ENCODE measurements at regions of chr5 and their contacts with region 1.

Region 1: GRCh38 chr5:59506285-59506877 is 387.1 kb downstream of the PDE4D start:
- DNase-seq: peak; percentile 27
- H3K4me3 Mint-ChIP-seq: no peak overlapping the region
- H3K27ac Mint-ChIP-seq: no peak overlapping the region
- H3K4me1 Mint-ChIP-seq: peaks cover 17% of the 10 kb centered on the region
- H3K27me3 Mint-ChIP-seq: no peaks in the 10 kb centered on the region
- CTCF ChIP-seq: peak; percentile 60

Region 2: DNA sequence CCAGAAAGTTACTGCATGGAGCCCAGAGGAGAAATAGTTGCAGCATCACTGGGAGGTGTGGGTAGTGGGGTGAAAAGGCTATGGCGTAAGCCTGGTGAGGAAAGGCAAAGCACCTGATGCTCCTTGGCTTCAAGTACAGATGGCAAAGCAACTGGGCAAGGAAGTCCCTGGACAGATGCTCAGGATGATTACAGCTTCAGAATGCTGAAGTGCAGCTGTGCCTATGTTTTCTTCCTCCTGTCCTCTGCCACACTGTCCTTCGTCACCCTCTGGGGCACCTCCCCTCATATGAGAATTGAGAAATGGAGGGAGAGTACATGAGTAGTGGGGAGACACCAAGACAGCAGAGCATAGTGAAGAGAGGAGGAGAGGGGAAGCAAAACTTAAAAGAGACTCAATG is 59.2 kb after region 1 on chr5:
- CTCF ChIA-PET with region 1: no interaction called
- POLR2A ChIA-PET with region 1: no interaction called
- intact Hi-C with region 1: no loop called
- DNase-seq: no peak
- H3K4me3 Mint-ChIP-seq: no peak overlapping the region
- H3K27ac Mint-ChIP-seq: no peak overlapping the region
- H3K4me1 Mint-ChIP-seq: peaks cover 32% of the 10 kb centered on the region
- H3K27me3 Mint-ChIP-seq: no peaks in the 10 kb centered on the region
- CTCF ChIP-seq: no peak

Region 3: DNA sequence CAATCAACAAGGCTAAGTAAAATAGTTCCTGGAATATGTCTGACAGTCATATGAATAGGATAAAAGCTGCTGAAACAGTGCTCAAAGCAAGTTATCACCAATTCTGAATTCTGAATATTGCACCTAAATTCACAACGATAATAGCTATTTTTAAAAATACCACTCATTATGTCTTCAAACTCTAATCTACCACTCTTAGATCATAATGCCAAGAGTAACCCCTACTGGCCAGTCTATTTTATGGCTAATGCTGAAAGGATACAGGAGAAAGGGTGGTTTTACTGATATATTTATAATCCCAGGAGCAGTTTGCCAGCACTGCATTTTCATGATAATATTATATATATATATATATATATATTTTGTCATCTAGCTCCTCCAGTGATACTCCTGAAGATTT is 154.4 kb after region 1 on chr5:
- CTCF ChIA-PET with region 1: interaction called, 63 read pairs
- POLR2A ChIA-PET with region 1: interaction called, 6 read pairs
- intact Hi-C with region 1: loop called (anchors 1 kb)
- DNase-seq: peak; percentile 36
- H3K4me3 Mint-ChIP-seq: no peak overlapping the region
- H3K27ac Mint-ChIP-seq: no peak overlapping the region
- H3K4me1 Mint-ChIP-seq: peaks cover 28% of the 10 kb centered on the region
- H3K27me3 Mint-ChIP-seq: no peaks in the 10 kb centered on the region
- CTCF ChIP-seq: peak; percentile 42

Region 4: GRCh38 chr5:59666440-59667068 is 160.2 kb after region 1 on chr5:
- CTCF ChIA-PET with region 1: interaction called, 72 read pairs
- POLR2A ChIA-PET with region 1: interaction called, 6 read pairs
- intact Hi-C with region 1: no loop called
- DNase-seq: no peak
- H3K4me3 Mint-ChIP-seq: no peak overlapping the region
- H3K27ac Mint-ChIP-seq: no peak overlapping the region
- H3K4me1 Mint-ChIP-seq: peaks cover 20% of the 10 kb centered on the region
- H3K27me3 Mint-ChIP-seq: no peaks in the 10 kb centered on the region
- CTCF ChIP-seq: no peak

Region 5: GRCh38 chr5:59673438-59674058 is 167.2 kb after region 1 on chr5:
- CTCF ChIA-PET with region 1: interaction called, 72 read pairs
- POLR2A ChIA-PET with region 1: interaction called, 10 read pairs
- intact Hi-C with region 1: loop called (anchors 1 kb)
- DNase-seq: peak; percentile 59
- H3K4me3 Mint-ChIP-seq: no peak overlapping the region
- H3K27ac Mint-ChIP-seq: no peak overlapping the region
- H3K4me1 Mint-ChIP-seq: peaks cover 6% of the 10 kb centered on the region
- H3K27me3 Mint-ChIP-seq: no peaks in the 10 kb centered on the region
- CTCF ChIP-seq: peak; percentile 65

Region 6: DNA sequence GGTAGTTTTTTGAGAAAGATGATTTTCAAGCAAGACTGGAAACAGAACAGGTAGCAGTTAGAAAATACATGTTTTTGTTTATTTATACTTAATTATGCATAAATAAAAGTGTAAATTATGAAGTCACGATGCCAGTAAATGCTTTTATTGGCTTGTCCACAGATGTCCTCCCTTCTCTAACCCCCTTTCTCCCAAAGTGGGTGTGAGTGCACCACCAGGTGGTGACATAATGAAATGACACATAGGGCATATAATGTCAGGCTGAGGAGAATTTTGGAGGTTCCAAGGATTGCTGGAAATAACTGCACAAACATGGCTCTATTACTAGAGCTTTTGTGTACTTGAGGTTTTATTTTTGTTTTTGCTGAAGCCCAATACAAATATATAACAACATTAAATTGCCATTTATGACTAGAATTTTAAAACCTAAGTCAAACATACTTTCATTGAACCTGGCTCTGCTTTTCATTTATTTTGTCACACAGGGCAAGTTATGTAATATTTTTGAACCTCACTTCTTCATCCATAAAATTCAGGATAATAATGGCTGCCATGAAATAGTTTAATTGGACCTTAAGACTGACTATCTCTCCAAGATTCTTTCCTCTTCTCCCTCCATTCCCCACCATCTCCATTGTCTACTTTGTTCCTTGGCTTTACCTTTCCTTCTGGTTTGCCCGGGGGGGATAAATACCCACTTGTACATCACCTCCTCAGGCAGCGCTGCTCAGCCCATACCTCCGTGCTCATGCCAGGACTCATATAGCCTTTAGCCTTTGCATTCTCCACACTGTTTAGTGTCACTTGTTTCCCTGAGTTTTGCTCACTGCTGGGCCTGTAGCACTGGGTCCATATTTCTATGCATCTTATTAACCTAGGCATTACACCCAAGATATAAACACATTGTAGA is 218.4 kb after region 1 on chr5:
- CTCF ChIA-PET with region 1: interaction called, 6 read pairs
- POLR2A ChIA-PET with region 1: no interaction called
- intact Hi-C with region 1: loop called (anchors 1 kb)
- DNase-seq: peak; percentile 80
- H3K4me3 Mint-ChIP-seq: no peak overlapping the region
- H3K27ac Mint-ChIP-seq: no peak overlapping the region
- H3K4me1 Mint-ChIP-seq: peaks cover 26% of the 10 kb centered on the region
- H3K27me3 Mint-ChIP-seq: no peaks in the 10 kb centered on the region
- CTCF ChIP-seq: peak; percentile 76

Region 7: DNA sequence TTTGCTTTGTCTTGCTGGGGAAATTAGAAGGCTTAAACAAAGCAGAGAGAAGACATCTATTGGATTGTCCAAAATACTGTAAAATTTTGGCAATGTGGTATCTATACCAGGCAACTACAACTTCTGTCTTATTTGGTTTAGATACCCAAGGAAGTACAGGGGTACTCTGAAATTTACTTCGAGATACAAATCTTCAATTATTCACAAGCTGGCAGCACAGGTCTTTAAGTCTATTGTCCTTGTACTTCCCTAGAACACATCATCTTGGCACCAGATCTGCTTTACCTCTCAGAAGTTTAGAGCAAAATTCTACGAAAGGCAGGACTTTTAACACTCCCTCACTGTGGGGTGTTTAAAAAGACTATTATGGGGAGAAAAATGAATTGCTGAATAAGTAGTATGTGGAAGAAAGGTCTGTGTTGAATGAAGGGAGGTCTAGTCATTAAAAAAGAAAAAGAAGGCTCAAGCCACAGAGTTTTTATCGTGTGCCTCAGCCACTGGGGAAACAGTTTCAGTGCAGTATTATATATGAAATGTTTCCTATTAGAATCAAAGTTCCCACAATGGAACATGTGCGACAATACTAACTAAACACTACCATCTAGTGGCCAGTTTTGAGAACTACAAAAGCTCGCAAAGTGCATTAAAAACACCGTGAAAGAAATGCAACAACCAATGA is 293.4 kb after region 1 on chr5:
- CTCF ChIA-PET with region 1: interaction called, 20 read pairs
- POLR2A ChIA-PET with region 1: interaction called, 4 read pairs
- intact Hi-C with region 1: loop called (anchors 1 kb)
- DNase-seq: peak; percentile 77
- H3K4me3 Mint-ChIP-seq: no peak overlapping the region
- H3K27ac Mint-ChIP-seq: no peak overlapping the region
- H3K4me1 Mint-ChIP-seq: no peaks in the 10 kb centered on the region
- H3K27me3 Mint-ChIP-seq: no peaks in the 10 kb centered on the region
- CTCF ChIP-seq: peak; percentile 67